ENCODE measurements at regions of chr16 and their contacts with region 1.

Region 1: GRCh38 chr16:4404247-4404966 is 12.0 kb downstream of the CORO7 start:
- DNase-seq: peak in 1 of 2 donors; percentile 86
- H3K4me3 ChIP-seq: no peak overlapping the region
- CTCF ChIP-seq: no peak
- POLR2A ChIP-seq: no peak

Region 2: GRCh38 chr16:4288148-4288921 is 116.1 kb before region 1 on chr16:
- intact Hi-C with region 1: loop called (anchors 5 kb)
- DNase-seq: peak in 1 of 2 donors; percentile 95
- H3K4me3 ChIP-seq: no peak overlapping the region
- CTCF ChIP-seq: peak in 1 of 3 donors; percentile 80
- POLR2A ChIP-seq: no peak

Region 3: DNA sequence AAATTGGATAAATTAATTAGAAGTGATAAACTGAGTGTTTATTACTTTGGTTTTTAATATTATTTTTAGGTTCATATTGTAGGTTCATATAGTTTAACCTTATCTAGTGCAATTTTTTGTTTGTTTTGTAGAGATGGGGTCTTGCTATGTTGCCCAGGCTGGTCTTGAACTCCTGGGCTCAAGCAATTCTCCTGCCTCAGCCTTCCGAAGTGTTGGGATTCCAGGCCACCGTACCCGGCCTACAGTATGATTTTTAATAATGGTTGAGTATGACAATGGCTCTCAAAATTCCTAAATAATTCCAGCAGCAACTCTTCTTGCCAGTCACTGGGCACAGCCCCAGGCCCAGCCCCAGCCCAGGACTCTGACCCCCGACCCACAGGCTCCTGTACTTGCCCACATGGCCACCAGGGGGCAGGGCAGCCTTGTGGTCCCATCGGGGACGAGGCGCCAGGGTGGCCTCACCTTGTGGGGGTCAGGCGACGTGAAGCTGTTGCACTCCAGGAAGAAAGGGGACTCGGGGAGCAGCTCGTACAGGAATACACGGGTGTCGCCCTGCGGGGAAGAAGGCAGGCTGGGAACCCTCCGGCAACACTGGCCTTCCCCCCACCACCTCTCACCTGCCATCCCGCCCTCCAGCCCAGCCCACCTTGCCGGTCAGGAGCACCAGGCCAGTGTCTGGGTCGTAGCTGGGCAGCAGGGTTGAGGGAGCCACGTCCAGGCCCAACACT is 45.4 kb before region 1 on chr16:
- intact Hi-C with region 1: loop called (anchors 2 kb)
- DNase-seq: peak in 1 of 2 donors; percentile 93
- H3K4me3 ChIP-seq: no peak overlapping the region
- CTCF ChIP-seq: peak in 1 of 3 donors; percentile 94
- POLR2A ChIP-seq: no peak

Region 4: DNA sequence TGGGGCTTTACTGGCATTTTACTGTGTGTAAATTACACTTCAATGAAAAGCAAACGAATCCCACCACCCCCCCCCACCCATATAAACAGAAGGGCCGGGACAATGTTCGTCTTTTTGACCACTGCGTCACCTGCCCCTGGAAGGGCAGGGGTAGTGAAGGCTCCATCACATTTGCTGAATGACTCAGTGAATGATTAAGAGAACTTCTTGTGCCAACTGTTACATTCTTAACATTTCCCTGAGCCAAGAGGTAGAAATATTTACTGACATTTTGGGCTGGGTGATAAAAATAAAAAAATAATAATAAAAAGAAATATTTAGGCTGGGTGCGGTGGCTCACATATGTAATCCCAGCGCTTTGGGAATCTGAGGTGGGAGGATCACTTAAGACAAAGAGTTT is 175.8 kb after region 1 on chr16:
- intact Hi-C with region 1: no loop called
- DNase-seq: no peak
- H3K4me3 ChIP-seq: no peak overlapping the region
- CTCF ChIP-seq: no peak
- POLR2A ChIP-seq: no peak